ENCODE measurements at regions of chr12 and their contacts with region 1.

Region 1: DNA sequence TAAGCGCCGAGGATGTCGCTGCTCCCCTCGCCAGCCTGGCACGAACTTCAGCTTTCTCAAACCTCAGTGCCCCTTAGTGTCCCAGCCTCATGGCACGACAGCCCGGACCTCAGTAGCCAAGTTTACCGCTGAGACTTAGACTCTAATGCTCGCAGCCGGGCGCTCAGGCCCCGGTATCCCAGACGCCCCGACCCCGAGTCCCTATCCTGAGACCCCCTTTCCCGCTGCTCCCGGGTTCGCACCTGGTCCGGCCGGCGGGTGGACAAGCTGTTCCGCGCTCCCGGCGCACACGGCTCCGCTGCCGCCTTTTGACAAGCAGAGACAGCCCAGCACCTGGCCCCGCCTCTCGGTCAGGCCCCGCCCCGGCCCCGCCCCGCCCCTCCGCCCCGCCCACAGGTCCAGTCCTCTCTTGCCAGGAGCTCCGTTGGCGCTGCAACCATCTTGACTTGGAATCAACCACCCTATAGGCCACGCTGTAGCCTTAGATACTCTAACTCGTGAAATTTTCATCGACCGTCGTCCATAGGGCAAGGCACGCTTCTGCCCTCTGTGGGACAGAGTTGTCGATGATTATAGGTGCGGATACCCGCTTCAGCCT is at the start of gene VDR:
- DNase-seq: peak; percentile 89 to 92
- H3K4me3 ChIP-seq: peak within 1 kb of the TSS; percentile 36
- H3K4me3 Mint-ChIP-seq: peak within 1 kb of the TSS; percentile 76
- H3K27ac Mint-ChIP-seq: peak within 1 kb of the TSS; percentile 88
- H3K4me1 ChIP-seq: peaks cover 57% of the 10 kb centered on the region
- H3K4me1 Mint-ChIP-seq: peaks cover 60% of the 10 kb centered on the region
- H3K27me3 ChIP-seq: no peaks in the 10 kb centered on the region; the same call in 1 of the 2 replicates
- H3K27me3 Mint-ChIP-seq: no peaks in the 10 kb centered on the region
- CTCF ChIP-seq: peak in 1 of 2 experiments; percentile 28
- total RNA-seq, gene VDR: 13.6 and 15.4 TPM in 2 replicates

Region 2: DNA sequence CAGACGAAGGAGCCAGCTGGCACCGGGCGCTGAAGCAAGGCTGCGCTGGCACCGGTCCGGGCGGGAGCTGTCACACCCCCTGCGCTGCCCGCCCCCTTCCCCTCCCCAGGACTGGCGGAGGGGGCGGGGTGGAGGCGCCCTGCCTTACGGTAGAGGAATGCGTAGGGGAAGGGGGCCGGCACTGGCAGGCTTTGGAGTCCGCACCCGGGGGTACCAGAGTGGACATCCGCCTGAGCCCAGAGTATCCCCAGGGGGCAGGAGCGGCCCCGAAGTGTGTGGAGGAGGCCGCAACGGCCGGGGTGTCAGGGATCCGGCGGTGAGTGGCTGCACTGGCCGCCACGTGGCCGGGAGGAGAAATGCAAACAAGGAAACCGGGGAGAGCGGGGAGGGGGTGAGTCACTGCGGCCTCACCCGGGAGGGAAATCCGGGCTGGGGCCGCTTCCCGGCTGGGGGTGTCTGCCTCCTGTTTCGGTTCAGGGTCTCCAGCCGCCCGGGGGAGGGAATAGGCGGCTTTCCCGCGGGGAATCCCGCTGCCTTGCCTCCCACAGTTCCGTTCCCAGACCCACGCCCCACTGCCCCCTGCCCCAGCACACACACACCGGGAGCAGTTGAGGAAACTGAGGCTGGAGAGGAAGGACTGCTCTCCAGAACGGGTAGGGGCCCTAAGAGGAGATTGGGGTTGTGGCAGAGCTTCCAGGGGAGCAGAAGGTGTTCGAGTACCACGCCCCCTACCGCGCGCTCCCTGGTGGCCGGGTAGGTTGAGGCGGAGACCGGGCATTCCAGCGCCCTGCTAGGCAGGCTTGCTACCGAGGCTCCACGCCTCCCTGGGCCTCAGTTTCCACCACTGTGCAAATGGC is 145.8 kb before region 1 on chr12 and contains the start of gene RAPGEF3:
- CTCF ChIA-PET with region 1: no interaction called
- POLR2A ChIA-PET with region 1: no interaction called
- intact Hi-C with region 1: no loop called
- DNase-seq: peak; percentile 85 to 90
- H3K4me3 ChIP-seq: peak within 1 kb of the TSS; percentile 52
- H3K4me3 Mint-ChIP-seq: peak within 1 kb of the TSS; percentile 80
- H3K27ac Mint-ChIP-seq: peak within 1 kb of the TSS; percentile 56
- H3K4me1 ChIP-seq: peaks cover 18% of the 10 kb centered on the region
- H3K4me1 Mint-ChIP-seq: peaks cover 10% of the 10 kb centered on the region
- H3K27me3 ChIP-seq: no peaks in the 10 kb centered on the region
- H3K27me3 Mint-ChIP-seq: no peaks in the 10 kb centered on the region
- CTCF ChIP-seq: peak; percentile 82 to 85
- total RNA-seq, gene RAPGEF3: 1.2 and 2.3 TPM in 2 replicates

Region 3: DNA sequence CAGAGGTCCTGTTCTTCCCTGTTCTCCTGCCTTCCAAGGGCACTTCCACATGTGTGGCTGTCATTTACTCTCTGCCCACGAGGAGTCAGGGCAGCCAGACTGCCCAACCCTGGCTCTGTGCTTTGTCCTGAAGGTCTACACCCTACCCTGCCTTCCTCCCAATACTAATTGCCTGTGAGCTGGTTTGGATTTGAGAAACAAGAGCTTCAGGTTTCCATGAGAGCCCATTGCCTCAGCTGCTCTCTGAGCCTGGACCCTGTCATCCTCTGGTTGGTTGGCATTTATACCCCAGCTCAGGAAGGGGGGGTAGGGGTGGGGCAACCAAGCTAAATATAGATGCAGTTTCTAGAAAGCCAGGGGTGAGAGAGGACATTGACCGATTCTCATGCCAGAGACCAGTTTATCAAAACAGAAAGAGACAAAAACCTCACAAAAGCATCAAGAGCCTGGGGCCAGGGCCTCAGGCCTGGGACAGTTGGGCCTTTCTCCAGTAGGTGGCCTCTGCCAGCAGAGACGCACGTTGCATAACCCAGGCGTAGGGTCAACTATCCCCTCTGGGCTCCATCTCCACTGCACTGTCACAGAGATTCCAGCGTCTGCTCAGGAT is 34.5 kb before region 1 on chr12:
- CTCF ChIA-PET with region 1: interaction called, 15 read pairs
- POLR2A ChIA-PET with region 1: interaction called, 3 read pairs
- intact Hi-C with region 1: no loop called
- DNase-seq: peak; percentile 75 to 78
- H3K4me3 ChIP-seq: no peak overlapping the region
- H3K4me3 Mint-ChIP-seq: no peak overlapping the region
- H3K27ac Mint-ChIP-seq: no peak overlapping the region
- H3K4me1 ChIP-seq: no peaks in the 10 kb centered on the region
- H3K4me1 Mint-ChIP-seq: no peaks in the 10 kb centered on the region
- H3K27me3 ChIP-seq: no peaks in the 10 kb centered on the region
- H3K27me3 Mint-ChIP-seq: no peaks in the 10 kb centered on the region
- CTCF ChIP-seq: peak; percentile 76 to 92

Region 4: DNA sequence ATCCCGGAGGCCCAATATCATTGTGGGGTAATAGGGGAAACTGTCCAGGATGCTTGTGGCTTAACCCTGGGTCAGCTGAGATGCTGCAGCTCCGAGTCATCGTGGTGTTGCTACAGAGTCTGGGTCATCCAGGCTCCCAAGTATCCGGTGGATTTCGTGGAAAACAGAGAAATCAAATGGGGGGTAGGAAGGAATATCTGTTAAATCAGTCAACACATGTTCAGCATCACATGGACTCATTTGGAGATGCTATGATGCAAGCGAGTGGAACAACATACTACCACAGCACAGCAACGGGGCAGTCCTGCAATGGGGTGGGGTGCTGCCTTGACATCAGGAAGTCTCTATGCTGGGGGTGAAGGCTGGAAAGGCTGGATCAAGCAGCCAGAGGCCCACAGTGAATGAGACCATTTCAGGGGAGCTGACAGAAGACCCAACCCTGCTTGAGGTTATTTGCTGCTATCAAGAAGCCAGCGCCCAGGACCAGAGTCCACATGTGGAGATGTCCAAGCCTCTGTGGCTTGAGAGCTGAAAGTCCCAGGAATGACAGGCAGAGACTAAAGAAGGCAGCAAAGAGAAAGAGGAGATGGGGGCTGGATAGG is 22.9 kb before region 1 on chr12:
- CTCF ChIA-PET with region 1: no interaction called
- POLR2A ChIA-PET with region 1: no interaction called
- intact Hi-C with region 1: no loop called
- DNase-seq: no peak
- H3K4me3 ChIP-seq: no peak overlapping the region
- H3K4me3 Mint-ChIP-seq: no peak overlapping the region
- H3K27ac Mint-ChIP-seq: no peak overlapping the region
- H3K4me1 ChIP-seq: peaks cover 8% of the 10 kb centered on the region; the same call in 1 of the 2 replicates
- H3K4me1 Mint-ChIP-seq: peaks cover 15% of the 10 kb centered on the region
- H3K27me3 ChIP-seq: no peaks in the 10 kb centered on the region
- H3K27me3 Mint-ChIP-seq: no peaks in the 10 kb centered on the region
- CTCF ChIP-seq: no peak

Region 5: GRCh38 chr12:47949441-47950308 is 44.9 kb after region 1 on chr12:
- CTCF ChIA-PET with region 1: interaction called, 187 read pairs
- POLR2A ChIA-PET with region 1: interaction called, 24 read pairs
- intact Hi-C with region 1: loop called (anchors 1 kb)
- DNase-seq: peak; percentile 86 to 94
- H3K4me3 ChIP-seq: no peak overlapping the region
- H3K4me3 Mint-ChIP-seq: no peak overlapping the region
- H3K27ac Mint-ChIP-seq: no peak overlapping the region
- H3K4me1 ChIP-seq: peaks cover 24% of the 10 kb centered on the region
- H3K4me1 Mint-ChIP-seq: peaks cover 40% of the 10 kb centered on the region
- H3K27me3 ChIP-seq: no peaks in the 10 kb centered on the region
- H3K27me3 Mint-ChIP-seq: no peaks in the 10 kb centered on the region
- CTCF ChIP-seq: peak; percentile 94 to 97

Region 6: GRCh38 chr12:48001505-48002413 is 96.9 kb after region 1 on chr12:
- CTCF ChIA-PET with region 1: interaction called, 5 read pairs
- POLR2A ChIA-PET with region 1: interaction called, 5 read pairs
- intact Hi-C with region 1: loop called (anchors 5 kb)
- DNase-seq: peak; percentile 75
- H3K4me3 ChIP-seq: peak overlapping the region; percentile 50
- H3K4me3 Mint-ChIP-seq: peak overlapping the region; percentile 95
- H3K27ac Mint-ChIP-seq: peak overlapping the region; percentile 92
- H3K4me1 ChIP-seq: peaks cover 23% of the 10 kb centered on the region
- H3K4me1 Mint-ChIP-seq: peaks cover 8% of the 10 kb centered on the region
- H3K27me3 ChIP-seq: no peaks in the 10 kb centered on the region
- H3K27me3 Mint-ChIP-seq: no peaks in the 10 kb centered on the region
- CTCF ChIP-seq: no peak

Region 7: DNA sequence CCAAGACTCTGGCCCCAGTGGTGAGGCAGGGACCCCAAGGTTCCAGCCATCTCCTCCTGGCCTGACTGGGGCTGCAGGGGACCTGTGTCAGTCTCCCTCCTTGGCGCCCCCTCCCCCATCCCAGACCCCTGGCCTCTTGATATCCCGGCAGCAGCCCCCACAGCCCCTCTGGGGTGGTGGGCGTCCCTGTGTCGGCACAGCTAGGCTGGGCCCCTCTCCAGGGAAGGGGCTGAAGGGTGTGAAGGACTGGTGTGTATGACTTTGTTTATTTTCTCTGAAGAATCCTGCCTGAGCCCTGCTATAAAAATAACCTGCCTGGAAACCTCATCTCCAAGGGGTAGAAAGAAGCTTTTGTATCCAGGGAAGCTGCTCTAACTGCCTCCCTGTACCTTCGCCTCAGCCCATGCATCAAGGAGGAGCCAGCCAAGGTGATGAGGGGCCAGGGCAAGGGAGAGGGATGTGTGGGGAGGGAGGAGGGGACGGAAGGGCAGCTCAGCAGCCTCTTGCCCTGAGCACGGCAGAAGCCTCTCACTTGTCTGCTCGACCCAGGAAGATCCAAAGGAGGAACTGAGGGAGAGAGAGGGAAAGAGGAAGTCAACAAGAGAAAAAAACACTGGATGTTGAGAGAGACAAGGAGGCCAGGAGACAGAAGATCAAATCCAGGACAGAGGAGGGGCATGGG is 124.8 kb after region 1 on chr12:
- CTCF ChIA-PET with region 1: interaction called, 10 read pairs
- POLR2A ChIA-PET with region 1: no interaction called
- intact Hi-C with region 1: no loop called
- DNase-seq: no peak
- H3K4me3 ChIP-seq: no peak overlapping the region
- H3K4me3 Mint-ChIP-seq: no peak overlapping the region
- H3K27ac Mint-ChIP-seq: peak overlapping the region; percentile 35
- H3K4me1 ChIP-seq: peaks cover 62% of the 10 kb centered on the region
- H3K4me1 Mint-ChIP-seq: peaks cover 29% of the 10 kb centered on the region
- H3K27me3 ChIP-seq: no peaks in the 10 kb centered on the region
- H3K27me3 Mint-ChIP-seq: no peaks in the 10 kb centered on the region
- CTCF ChIP-seq: no peak

Region 8: GRCh38 chr12:48165094-48165981 is 260.5 kb after region 1 on chr12:
- CTCF ChIA-PET with region 1: no interaction called
- POLR2A ChIA-PET with region 1: no interaction called
- intact Hi-C with region 1: loop called (anchors 1 kb)
- DNase-seq: peak in 1 of 2 experiments; percentile 76
- H3K4me3 ChIP-seq: no peak overlapping the region
- H3K4me3 Mint-ChIP-seq: no peak overlapping the region
- H3K27ac Mint-ChIP-seq: no peak overlapping the region
- H3K4me1 ChIP-seq: no peaks in the 10 kb centered on the region
- H3K4me1 Mint-ChIP-seq: no peaks in the 10 kb centered on the region
- H3K27me3 ChIP-seq: no peaks in the 10 kb centered on the region
- H3K27me3 Mint-ChIP-seq: no peaks in the 10 kb centered on the region
- CTCF ChIP-seq: peak; percentile 92 to 96

Measured in Caco-2 (cell line).